Endothelial cell of umbilical vein (primary cell): ENCODE measurements at regions of chr19 and their contacts with region 1.

Region 1: DNA sequence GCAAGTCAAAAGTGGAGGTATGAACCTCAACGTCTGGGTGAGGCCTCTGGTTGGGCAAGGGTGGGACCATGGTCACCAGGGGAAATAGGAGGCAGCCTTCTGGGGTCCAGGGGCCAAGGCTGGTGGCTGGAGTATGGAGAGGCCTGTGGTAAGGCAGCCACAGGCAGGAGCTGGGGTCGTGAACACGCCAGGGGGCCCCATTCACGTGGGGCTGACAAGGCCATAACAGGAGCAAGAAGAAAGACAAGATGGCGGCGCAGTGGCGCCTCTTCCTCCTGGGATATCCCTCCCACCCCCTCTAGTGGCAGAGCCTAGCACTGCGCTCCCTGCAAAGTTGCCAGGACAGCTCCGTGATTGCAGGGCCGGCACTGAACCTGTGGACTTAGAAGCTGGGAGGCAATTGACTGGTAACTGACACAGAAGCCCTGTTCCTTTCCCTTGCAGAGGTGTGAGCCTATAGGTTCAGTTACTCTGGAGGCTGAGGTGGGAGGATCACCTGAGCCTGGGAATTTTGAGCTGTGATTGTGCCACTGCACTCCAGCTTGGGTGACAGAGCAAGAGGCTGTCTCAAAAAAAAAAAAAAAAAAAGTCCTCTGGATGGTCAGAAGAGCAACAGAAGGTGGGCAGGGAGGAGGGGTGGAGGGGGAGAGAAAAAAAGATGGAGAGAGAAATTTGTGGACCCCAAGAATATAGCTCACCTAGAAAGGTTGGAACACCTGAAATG is 19.7 kb upstream of the EDDM13 start:
- DNase-seq: peak; percentile 70
- H3K4me3 ChIP-seq: no peak overlapping the region
- H3K27ac ChIP-seq: no peak overlapping the region
- H3K4me1 ChIP-seq: no peaks in the 10 kb centered on the region
- H3K27me3 ChIP-seq: no peaks in the 10 kb centered on the region
- CTCF ChIP-seq: peak; percentile 88 to 94
- POLR2A ChIP-seq: no peak

Region 2: DNA sequence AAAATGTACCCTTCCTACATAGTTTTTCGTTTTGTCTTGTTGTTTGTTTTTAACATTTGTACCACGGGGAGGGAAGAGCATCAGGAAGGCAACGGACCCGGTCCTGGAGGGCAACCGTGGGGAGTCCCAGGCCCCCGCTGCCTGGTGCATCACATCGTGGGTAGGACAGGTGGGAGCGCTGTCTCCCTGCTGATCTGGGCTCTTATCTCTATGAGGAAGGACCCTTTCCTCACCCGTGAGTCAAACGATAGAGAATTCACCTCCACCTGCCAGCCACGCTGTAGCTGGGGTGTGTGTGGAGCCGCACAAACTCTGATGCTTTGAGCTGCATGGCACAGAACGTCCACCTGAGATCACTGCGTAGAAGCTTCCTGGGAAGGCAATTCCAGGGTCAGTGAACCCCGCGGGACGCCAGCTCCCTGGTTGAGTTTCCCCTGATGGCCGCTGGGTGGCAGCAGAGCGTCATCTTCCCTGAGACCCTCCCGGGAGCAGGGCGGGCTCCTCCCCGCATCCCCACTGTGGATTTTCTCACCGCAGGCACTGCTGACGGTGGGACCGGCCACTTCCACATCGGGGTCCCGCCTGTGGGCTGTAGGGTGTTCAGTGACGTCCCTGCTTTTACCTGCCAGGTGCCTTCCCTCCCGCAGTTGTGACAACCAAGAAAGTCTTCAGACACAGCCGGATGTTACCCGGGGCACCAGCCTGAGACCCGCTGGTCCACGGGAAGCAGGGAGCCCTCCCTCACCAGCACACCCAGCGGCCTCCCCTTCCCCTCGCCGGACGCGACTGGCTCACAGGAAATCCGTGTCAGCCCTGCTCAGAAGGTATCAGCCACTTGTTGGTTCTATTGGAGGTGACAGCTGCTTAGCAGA is 186.5 kb before region 1 on chr19:
- CTCF ChIA-PET with region 1: interaction called, 89 read pairs
- POLR2A ChIA-PET with region 1: no interaction called
- dilution Hi-C with region 1: no loop called
- intact Hi-C with region 1: loop called (anchors 1 kb)
- DNase-seq: peak; percentile 54
- H3K4me3 ChIP-seq: peak overlapping the region in 2 of 3 experiments; percentile 20 to 32
- H3K27ac ChIP-seq: no peak overlapping the region
- H3K4me1 ChIP-seq: peaks cover 7% of the 10 kb centered on the region
- H3K27me3 ChIP-seq: no peaks in the 10 kb centered on the region
- CTCF ChIP-seq: peak; percentile 91 to 95
- POLR2A ChIP-seq: no peak

Region 3: GRCh38 chr19:56080669-56081401 is 172.0 kb before region 1 on chr19:
- CTCF ChIA-PET with region 1: interaction called, 78 read pairs
- POLR2A ChIA-PET with region 1: no interaction called
- dilution Hi-C with region 1: no loop called
- intact Hi-C with region 1: loop called (anchors 1 kb)
- DNase-seq: peak; percentile 83
- H3K4me3 ChIP-seq: peak overlapping the region; percentile 10 to 38 (median 32)
- H3K27ac ChIP-seq: no peak overlapping the region
- H3K4me1 ChIP-seq: peaks cover 8% of the 10 kb centered on the region
- H3K27me3 ChIP-seq: peaks cover 0 to 3% of the 10 kb centered on the region in 2 experiments
- CTCF ChIP-seq: peak; percentile 58 to 81
- POLR2A ChIP-seq: no peak

Region 4: GRCh38 chr19:56273563-56274117 is 20.8 kb after region 1 on chr19:
- CTCF ChIA-PET with region 1: interaction called, 70 read pairs
- POLR2A ChIA-PET with region 1: interaction called, 4 read pairs
- dilution Hi-C with region 1: no loop called
- intact Hi-C with region 1: no loop called
- DNase-seq: peak; percentile 80
- H3K4me3 ChIP-seq: no peak overlapping the region
- H3K27ac ChIP-seq: peak overlapping the region; percentile 64
- H3K4me1 ChIP-seq: peaks cover 27% of the 10 kb centered on the region
- H3K27me3 ChIP-seq: no peaks in the 10 kb centered on the region
- CTCF ChIP-seq: no peak
- POLR2A ChIP-seq: no peak

Region 5: GRCh38 chr19:56301182-56301581 is 48.3 kb after region 1 on chr19:
- CTCF ChIA-PET with region 1: interaction called, 36 read pairs
- POLR2A ChIA-PET with region 1: no interaction called
- dilution Hi-C with region 1: no loop called
- intact Hi-C with region 1: no loop called
- DNase-seq: peak; percentile 37
- H3K4me3 ChIP-seq: no peak overlapping the region
- H3K27ac ChIP-seq: peak overlapping the region; percentile 35
- H3K4me1 ChIP-seq: peaks cover 15% of the 10 kb centered on the region
- H3K27me3 ChIP-seq: no peaks in the 10 kb centered on the region
- CTCF ChIP-seq: peak; percentile 13 to 28
- POLR2A ChIP-seq: no peak

Region 6: GRCh38 chr19:56350416-56351045 is 97.7 kb after region 1 on chr19:
- CTCF ChIA-PET with region 1: interaction called, 79 read pairs
- POLR2A ChIA-PET with region 1: no interaction called
- dilution Hi-C with region 1: no loop called
- intact Hi-C with region 1: loop called (anchors 1 kb)
- DNase-seq: peak; percentile 55
- H3K4me3 ChIP-seq: no peak overlapping the region
- H3K27ac ChIP-seq: no peak overlapping the region
- H3K4me1 ChIP-seq: no peaks in the 10 kb centered on the region
- H3K27me3 ChIP-seq: no peaks in the 10 kb centered on the region
- CTCF ChIP-seq: peak; percentile 56 to 75
- POLR2A ChIP-seq: no peak